GM12878 (cell line): ENCODE measurements at regions of chr19 and their contacts with region 1.

Region 1: DNA sequence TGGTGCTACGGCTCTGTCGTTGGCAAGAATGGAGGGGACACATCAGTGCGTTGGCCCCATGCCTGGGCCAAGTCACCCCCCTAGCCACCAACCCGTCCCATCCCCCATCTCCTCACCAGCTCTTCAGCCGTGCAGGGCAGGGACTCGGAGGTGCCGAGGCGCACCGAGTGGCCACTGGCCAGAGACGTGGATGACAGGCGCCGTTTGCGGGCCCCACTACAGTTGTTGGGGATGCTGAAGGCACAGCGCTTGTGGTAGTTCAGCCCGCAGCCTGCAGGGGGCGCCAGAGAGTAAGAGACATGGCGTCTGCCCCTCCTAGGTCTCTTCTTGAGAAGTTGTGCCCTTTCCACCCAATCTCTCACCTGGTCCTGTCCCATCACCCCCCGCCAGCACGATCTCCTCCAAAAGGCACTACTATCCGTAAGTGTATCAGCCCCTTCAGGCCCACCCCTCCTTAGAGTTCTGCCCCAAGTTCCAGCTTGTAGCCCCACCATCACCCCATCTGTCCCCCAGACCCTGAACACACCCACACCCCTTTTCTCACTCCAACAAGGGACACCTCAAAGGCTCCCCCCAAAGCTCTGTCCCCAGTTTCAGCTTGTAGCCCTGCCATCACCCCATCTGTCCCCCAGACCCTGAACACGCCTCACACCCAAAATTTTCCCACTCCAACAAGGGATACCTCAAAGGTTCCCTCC is 12.4 kb downstream of the PRKD2 start:
- DNase-seq: no peak
- ATAC-seq: peak; percentile 98
- H3K4me3 ChIP-seq: no peak overlapping the region
- H3K27ac ChIP-seq: no peak overlapping the region
- H3K4me1 ChIP-seq: no peaks in the 10 kb centered on the region
- H3K27me3 ChIP-seq: no peaks in the 10 kb centered on the region
- CTCF ChIP-seq: peak; percentile 90 to 97 (median 90)
- EP300 ChIP-seq: no peak
- POLR2A ChIP-seq: peak; percentile 51
- RAD21 ChIP-seq: peak; percentile 60

Region 2: GRCh38 chr19:46579361-46579879 is 125.1 kb before region 1 on chr19:
- CTCF ChIA-PET with region 1: no interaction called
- POLR2A ChIA-PET with region 1: no interaction called
- RAD21 ChIA-PET with region 1: no interaction called
- SMC1A ChIA-PET with region 1: no interaction called
- in situ Hi-C with region 1: no loop called
- intact Hi-C with region 1: no loop called
- DNase-seq: no peak
- ATAC-seq: no peak
- H3K4me3 ChIP-seq: no peak overlapping the region
- H3K27ac ChIP-seq: no peak overlapping the region
- H3K4me1 ChIP-seq: no peaks in the 10 kb centered on the region
- H3K27me3 ChIP-seq: no peaks in the 10 kb centered on the region
- CTCF ChIP-seq: no peak
- EP300 ChIP-seq: no peak
- POLR2A ChIP-seq: no peak
- RAD21 ChIP-seq: no peak

Region 3: GRCh38 chr19:46687438-46688145 is 16.9 kb before region 1 on chr19:
- CTCF ChIA-PET with region 1: interaction called, 16 read pairs
- POLR2A ChIA-PET with region 1: no interaction called
- RAD21 ChIA-PET with region 1: no interaction called
- SMC1A ChIA-PET with region 1: no interaction called
- in situ Hi-C with region 1: no loop called
- intact Hi-C with region 1: no loop called
- DNase-seq: no peak
- ATAC-seq: no peak
- H3K4me3 ChIP-seq: no peak overlapping the region
- H3K27ac ChIP-seq: no peak overlapping the region
- H3K4me1 ChIP-seq: no peaks in the 10 kb centered on the region
- H3K27me3 ChIP-seq: no peaks in the 10 kb centered on the region
- CTCF ChIP-seq: no peak
- EP300 ChIP-seq: no peak
- POLR2A ChIP-seq: no peak
- RAD21 ChIP-seq: no peak

Region 4: GRCh38 chr19:46692918-46693722 is 11.4 kb before region 1 on chr19:
- CTCF ChIA-PET with region 1: interaction called, 16 read pairs
- POLR2A ChIA-PET with region 1: no interaction called
- RAD21 ChIA-PET with region 1: no interaction called
- SMC1A ChIA-PET with region 1: no interaction called
- in situ Hi-C with region 1: no loop called
- intact Hi-C with region 1: no loop called
- DNase-seq: no peak
- ATAC-seq: no peak
- H3K4me3 ChIP-seq: no peak overlapping the region
- H3K27ac ChIP-seq: no peak overlapping the region
- H3K4me1 ChIP-seq: no peaks in the 10 kb centered on the region
- H3K27me3 ChIP-seq: no peaks in the 10 kb centered on the region
- CTCF ChIP-seq: no peak
- EP300 ChIP-seq: no peak
- POLR2A ChIP-seq: no peak; the same call in 1 of the 2 replicates
- RAD21 ChIP-seq: no peak

Region 5: DNA sequence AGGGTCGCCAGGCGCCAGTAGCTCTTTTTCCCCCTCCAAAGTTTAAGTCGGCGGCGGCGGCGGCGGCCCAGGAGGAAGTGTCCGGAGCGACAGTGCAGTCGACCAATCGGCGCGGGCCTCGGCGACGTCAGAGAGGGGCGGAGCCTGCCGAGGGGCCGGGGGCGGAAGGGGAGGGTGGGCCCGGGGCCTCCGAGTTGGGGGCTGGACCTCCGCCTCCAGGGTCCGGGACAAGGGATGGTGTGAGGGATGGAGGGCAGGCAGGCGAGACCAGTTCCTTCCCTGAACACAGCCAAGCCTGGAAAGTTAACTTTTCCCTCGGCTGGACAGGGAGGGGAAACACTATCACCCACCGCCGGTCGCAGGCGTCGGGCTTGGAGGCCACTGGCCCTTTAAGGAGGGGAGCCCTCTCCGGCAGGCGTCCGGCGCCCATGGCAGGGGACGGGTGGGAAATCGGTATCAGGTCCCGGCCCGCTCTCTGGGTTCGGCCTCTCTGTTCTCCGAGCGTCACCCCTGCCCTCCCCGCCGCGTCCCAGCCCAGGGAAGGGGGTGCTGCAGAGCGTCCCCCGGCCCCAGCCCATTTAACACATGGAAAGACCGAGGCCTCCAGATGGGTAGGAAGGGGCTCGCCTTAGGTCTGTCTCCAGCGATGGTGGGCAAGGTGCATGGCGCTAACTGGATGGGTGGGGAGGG is 12.7 kb after region 1 on chr19 and contains the start of gene PRKD2:
- CTCF ChIA-PET with region 1: interaction called, 64 read pairs
- POLR2A ChIA-PET with region 1: interaction called, 3 read pairs
- RAD21 ChIA-PET with region 1: interaction called, 4 read pairs
- SMC1A ChIA-PET with region 1: interaction called, 8 read pairs
- in situ Hi-C with region 1: no loop called
- intact Hi-C with region 1: no loop called
- DNase-seq: no peak
- ATAC-seq: peak; percentile 67
- H3K4me3 ChIP-seq: peak within 1 kb of the TSS; percentile 91
- H3K27ac ChIP-seq: peak within 1 kb of the TSS; percentile 88
- H3K4me1 ChIP-seq: peaks cover 30% of the 10 kb centered on the region
- H3K27me3 ChIP-seq: no peaks in the 10 kb centered on the region
- CTCF ChIP-seq: no peak
- EP300 ChIP-seq: no peak
- POLR2A ChIP-seq: peak; percentile 72
- RAD21 ChIP-seq: no peak
- polyA plus RNA-seq, gene PRKD2: 2.3 to 11.8 TPM

Region 6: DNA sequence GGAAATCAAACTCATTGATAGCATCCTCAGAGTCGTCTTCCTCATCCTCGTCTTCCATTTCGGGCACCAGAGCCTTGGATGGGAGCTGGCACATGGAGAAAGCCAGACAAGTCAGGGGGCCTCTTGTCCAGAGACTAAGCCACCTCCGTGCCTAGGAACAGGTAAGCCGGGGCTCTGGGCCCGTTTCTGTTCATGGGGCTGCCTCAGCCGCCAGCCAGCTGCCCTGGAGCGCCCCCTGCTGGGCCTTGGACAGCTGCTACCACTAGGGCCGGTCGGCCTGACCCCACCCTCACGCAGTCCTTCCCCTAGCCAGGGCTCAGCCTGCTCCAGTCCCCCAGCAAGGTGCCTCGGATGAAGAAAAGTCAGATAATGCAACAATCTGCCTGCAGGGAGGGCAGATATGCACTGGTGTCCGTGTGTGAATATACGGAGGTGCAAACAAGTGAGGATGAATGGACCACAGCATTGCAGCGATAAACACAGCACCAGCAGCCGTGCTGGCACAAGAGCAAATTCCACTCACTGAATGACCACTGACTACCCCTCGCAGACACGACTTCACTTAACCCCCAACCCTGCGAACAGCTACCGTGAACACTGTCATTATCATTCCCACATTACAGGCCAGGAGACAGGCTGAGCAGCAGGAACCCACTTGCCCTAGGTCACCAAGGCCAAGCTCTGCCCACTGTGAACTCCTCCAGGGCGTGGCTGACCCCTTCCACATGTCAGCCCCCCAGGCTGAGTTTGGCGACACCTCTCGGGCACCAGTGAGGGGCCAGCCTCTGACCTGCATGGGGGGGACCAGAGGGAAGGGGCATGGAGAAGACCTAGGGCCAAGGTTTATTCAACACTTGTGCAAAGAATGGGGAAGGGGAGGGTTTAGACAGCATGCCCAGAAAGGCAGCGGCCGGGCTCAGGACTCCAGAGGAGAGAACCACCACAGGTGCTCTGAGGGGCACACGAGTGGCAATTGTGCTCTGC is 24.5 kb after region 1 on chr19:
- CTCF ChIA-PET with region 1: interaction called, 78 read pairs
- POLR2A ChIA-PET with region 1: interaction called, 3 read pairs
- RAD21 ChIA-PET with region 1: interaction called, 5 read pairs
- SMC1A ChIA-PET with region 1: interaction called, 21 read pairs
- in situ Hi-C with region 1: no loop called
- intact Hi-C with region 1: loop called (anchors 1 kb)
- DNase-seq: no peak
- ATAC-seq: peak; percentile 97
- H3K4me3 ChIP-seq: no peak overlapping the region
- H3K27ac ChIP-seq: no peak overlapping the region
- H3K4me1 ChIP-seq: peaks cover 10% of the 10 kb centered on the region
- H3K27me3 ChIP-seq: no peaks in the 10 kb centered on the region
- CTCF ChIP-seq: peak; percentile 85 to 96 (median 91)
- EP300 ChIP-seq: no peak
- POLR2A ChIP-seq: peak; percentile 32
- RAD21 ChIP-seq: peak; percentile 75

Region 7: DNA sequence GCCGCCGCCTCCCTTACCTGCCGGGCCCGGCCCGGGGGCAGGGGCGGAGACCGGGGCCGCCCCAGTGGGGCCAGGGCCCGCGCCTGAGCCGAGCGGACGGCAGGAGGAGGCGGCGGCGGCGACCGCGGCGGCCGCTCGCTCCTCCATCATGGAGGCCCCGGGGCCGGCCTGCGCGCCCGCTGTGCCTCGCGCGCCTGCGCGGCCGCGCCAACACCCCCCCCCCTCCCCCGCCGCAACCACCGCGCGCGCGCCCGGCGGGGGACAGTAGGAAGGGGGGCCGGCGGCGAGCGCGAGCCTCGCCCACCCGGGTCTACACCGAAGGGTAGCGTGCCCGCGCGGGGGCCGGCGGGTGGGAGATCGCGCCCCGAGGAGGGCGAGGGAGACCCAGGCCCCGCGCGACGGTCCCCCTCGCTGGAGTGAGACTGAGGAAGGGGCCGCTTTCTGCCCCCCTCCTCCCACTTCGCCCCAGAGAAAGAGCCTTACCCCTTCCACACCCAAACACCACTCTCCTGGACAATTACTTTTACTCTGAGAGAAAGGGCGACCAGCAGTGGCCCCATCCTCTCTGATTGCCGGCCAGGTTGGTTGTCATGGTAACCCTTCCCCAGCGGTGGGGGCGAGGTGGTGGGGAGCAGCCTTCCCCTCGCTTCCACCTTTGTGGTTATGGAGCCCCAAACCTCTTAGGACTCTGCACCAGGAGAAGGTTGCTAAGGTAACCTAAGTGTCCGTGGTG is 41.9 kb after region 1 on chr19 and contains the start of gene STRN4:
- CTCF ChIA-PET with region 1: interaction called, 28 read pairs
- POLR2A ChIA-PET with region 1: interaction called, 3 read pairs
- RAD21 ChIA-PET with region 1: interaction called, 4 read pairs
- SMC1A ChIA-PET with region 1: no interaction called
- in situ Hi-C with region 1: no loop called
- intact Hi-C with region 1: loop called (anchors 5 kb)
- DNase-seq: no peak
- ATAC-seq: peak; percentile 49
- H3K4me3 ChIP-seq: peak within 1 kb of the TSS; percentile 100
- H3K27ac ChIP-seq: peak within 1 kb of the TSS; percentile 83
- H3K4me1 ChIP-seq: peaks cover 17% of the 10 kb centered on the region
- H3K27me3 ChIP-seq: no peaks in the 10 kb centered on the region
- CTCF ChIP-seq: no peak
- EP300 ChIP-seq: no peak
- POLR2A ChIP-seq: peak; percentile 66
- RAD21 ChIP-seq: no peak
- polyA plus RNA-seq, gene STRN4: 0.42 to 1.6 TPM